ENCODE measurements at regions of chr5 and their contacts with region 1.

Region 1: GRCh38 chr5:150350524-150351344 is 6.8 kb upstream of the TCOF1 start:
- DNase-seq: peak; percentile 80 to 84 (median 82)
- ATAC-seq: peak; percentile 99
- H3K4me3 ChIP-seq: no peak overlapping the region
- H3K27ac ChIP-seq: no peak overlapping the region
- H3K4me1 ChIP-seq: no peaks in the 10 kb centered on the region; a peak in 1 of 5 replicates
- H3K27me3 ChIP-seq: peaks cover 9 to 18% of the 10 kb centered on the region in 2 experiments; a peak in 4 of 5 replicates
- CTCF ChIP-seq: peak; percentile 86 to 90 (median 87)
- EP300 ChIP-seq: no peak
- POLR2A ChIP-seq: no peak
- RAD21 ChIP-seq: peak; percentile 94 to 96

Region 2: DNA sequence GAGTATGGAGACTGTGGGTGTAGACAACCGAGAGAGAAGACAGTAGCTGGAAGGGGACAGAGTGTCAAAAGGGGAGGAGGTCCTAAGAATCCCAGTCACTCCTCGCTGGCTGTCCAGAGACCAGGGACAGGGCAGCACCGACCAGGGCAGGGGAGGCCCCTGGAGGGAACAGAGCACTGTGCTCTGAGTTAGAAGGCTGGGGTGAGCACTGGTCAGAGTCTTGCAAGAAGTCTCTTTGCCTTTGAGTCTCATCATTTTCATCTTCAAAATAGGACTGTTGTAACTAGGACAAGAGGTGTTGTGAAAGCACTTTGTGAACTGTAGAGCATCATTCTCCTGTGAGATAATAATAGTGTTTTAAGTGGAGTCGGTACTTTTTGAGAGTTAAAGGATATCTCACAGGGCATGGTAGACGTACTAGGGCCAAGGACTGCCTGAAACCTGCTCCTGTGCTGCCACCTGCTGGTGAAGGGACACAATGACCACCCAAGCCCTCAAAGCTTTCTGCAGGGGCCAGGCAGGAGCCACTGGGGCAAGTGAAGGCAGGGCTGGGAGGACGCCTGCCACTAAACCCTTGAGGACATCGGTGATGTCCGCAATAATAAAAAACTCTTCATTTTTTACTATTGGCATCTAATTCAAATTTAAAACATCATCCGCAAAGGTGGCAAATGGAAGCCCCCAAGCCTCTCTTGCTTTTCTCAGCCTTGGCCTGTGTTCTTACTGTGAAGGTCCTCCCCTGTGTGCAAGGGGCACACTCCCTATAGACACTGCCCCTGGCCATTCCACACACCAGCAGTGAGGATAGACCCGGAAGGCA is 132.7 kb before region 1 on chr5:
- CTCF ChIA-PET with region 1: no interaction called
- POLR2A ChIA-PET with region 1: no interaction called
- in situ Hi-C with region 1: no loop called
- intact Hi-C with region 1: loop called (anchors 2 kb)
- DNase-seq: peak; percentile 82 to 89 (median 88)
- ATAC-seq: peak; percentile 97
- H3K4me3 ChIP-seq: no peak overlapping the region
- H3K27ac ChIP-seq: no peak overlapping the region
- H3K4me1 ChIP-seq: peaks cover 3 to 4% of the 10 kb centered on the region in 2 experiments; a peak in 3 of 5 replicates
- H3K27me3 ChIP-seq: peaks cover 13 to 34% of the 10 kb centered on the region in 2 experiments; a peak in 4 of 5 replicates
- CTCF ChIP-seq: peak; percentile 89 to 94 (median 90)
- EP300 ChIP-seq: no peak
- POLR2A ChIP-seq: no peak
- RAD21 ChIP-seq: peak; percentile 96

Region 3: GRCh38 chr5:150272526-150272925 is 78.2 kb before region 1 on chr5:
- CTCF ChIA-PET with region 1: interaction called, 5 read pairs
- POLR2A ChIA-PET with region 1: no interaction called
- in situ Hi-C with region 1: loop called (anchors 5 kb)
- intact Hi-C with region 1: loop called (anchors 1 kb)
- DNase-seq: peak in 3 of 4 experiments; percentile 35 to 63 (median 62)
- ATAC-seq: peak; percentile 89
- H3K4me3 ChIP-seq: no peak overlapping the region
- H3K27ac ChIP-seq: no peak overlapping the region
- H3K4me1 ChIP-seq: no peaks in the 10 kb centered on the region
- H3K27me3 ChIP-seq: peaks cover 22 to 57% of the 10 kb centered on the region in 2 experiments; a peak in 4 of 5 replicates
- CTCF ChIP-seq: peak; percentile 65 to 82 (median 75)
- EP300 ChIP-seq: no peak
- POLR2A ChIP-seq: no peak
- RAD21 ChIP-seq: peak; percentile 90 to 94